Tibial artery (tissue), 4 donors: ENCODE measurements at regions of chr7 and their contacts with region 1.

Region 1: DNA sequence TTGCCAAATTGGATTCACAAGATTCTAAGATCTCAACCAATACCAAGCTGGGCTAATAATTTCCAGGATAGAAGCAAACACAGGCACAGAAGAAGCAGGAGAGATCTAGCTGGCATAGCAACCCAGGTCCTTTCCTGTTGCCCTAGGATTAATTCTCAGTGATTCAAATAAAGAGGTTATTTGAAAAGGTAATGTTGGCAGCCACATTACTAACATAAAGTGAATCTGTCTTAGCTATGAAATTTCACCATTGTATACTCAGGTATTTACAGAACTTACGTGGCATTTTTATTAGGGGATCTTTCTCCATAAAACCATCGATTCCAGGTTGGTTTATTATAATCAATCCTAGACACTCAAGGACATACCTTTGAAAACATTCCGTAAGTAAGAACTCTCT is 379.3 kb upstream of the POM121L12 start:
- DNase-seq: no peak
- H3K4me3 ChIP-seq: no peak overlapping the region
- H3K27ac ChIP-seq: no peak overlapping the region
- H3K4me1 ChIP-seq: no peaks in the 10 kb centered on the region
- H3K27me3 ChIP-seq: no peaks in the 10 kb centered on the region
- CTCF ChIP-seq: no peak

Region 2: DNA sequence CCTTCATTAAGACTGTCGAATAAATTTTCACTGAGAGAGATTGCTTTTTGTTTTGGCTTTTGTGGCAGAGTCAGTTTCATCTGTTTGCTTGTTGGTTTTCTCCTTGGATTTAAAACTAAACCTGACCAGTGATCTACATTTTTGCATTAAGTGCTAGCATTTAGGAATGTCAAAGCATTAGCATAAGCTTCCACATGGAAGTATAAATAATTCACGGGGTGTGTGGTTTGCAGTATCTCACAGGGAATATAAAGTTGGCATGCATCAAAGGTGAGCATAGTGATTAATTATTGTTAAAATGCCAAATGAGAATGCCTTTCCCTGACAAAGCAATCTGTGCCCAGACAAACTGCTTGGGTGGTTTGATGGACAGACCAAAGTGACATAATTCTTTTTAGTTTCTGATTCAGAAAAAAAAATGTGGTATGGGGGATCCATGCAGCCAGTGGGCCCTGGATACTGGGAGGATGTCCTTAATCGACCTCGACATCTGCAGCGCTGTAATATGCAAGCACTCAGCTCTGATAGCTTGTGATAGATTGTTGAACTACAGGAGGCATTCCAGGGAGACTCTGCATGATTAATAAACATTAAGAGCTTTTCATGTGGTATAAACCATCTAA is 40.0 kb after region 1 on chr7:
- intact Hi-C with region 1: loop called (anchors 2 kb)
- DNase-seq: no peak
- H3K4me3 ChIP-seq: no peak overlapping the region
- H3K27ac ChIP-seq: no peak overlapping the region
- H3K4me1 ChIP-seq: no peaks in the 10 kb centered on the region
- H3K27me3 ChIP-seq: no peaks in the 10 kb centered on the region
- CTCF ChIP-seq: no peak